ENCODE measurements at regions of chrX and their contacts with region 1.

Region 1: GRCh38 chrX:41010188-41010846 is 74.9 kb upstream of the USP9X start:
- DNase-seq: peak; percentile 75
- H3K4me3 ChIP-seq: peak overlapping the region; percentile 7 to 35 (median 13)
- H3K27ac ChIP-seq: peak overlapping the region; percentile 85
- H3K4me1 ChIP-seq: peaks cover 9% of the 10 kb centered on the region
- H3K27me3 ChIP-seq: no peaks in the 10 kb centered on the region
- CTCF ChIP-seq: no peak

Region 2: DNA sequence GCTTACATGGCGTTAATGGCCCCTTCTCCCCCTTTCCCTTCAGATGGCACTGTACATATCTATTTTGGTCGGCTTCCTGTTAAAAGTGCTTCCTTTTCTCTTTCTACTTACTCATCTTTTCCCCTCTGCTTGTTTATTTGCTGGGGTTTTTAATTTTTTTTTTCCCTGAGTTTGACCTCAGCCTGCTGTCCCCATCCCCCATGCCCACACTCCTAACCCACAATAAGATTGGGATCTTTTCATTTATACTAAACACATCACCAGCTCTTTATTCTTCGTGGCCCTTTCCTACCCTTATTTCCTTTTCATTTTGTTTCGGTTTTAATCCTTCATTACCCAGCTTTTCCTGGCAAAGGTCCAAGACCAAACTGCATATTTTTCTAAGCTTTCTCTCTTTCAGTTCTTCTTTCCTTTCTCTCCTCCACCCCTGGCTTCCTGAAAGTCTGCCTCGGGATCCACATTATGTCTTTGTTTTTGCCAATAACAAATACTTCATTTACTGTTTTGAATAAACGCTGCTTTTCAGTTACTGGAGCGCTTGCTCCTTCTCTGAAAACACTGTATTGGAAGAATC is 77.1 kb before region 1 on chrX:
- CTCF ChIA-PET with region 1: no interaction called
- dilution Hi-C with region 1: no loop called
- in situ Hi-C with region 1: no loop called
- intact Hi-C with region 1: loop called (anchors 5 kb)
- DNase-seq: no peak
- H3K4me3 ChIP-seq: peak overlapping the region in 1 of 3 experiments; percentile 2
- H3K27ac ChIP-seq: peak overlapping the region; percentile 18
- H3K4me1 ChIP-seq: peaks cover 6% of the 10 kb centered on the region
- H3K27me3 ChIP-seq: no peaks in the 10 kb centered on the region
- CTCF ChIP-seq: no peak

Region 3: GRCh38 chrX:41096339-41096955 is 86.1 kb after region 1 on chrX:
- CTCF ChIA-PET with region 1: no interaction called
- dilution Hi-C with region 1: no loop called
- in situ Hi-C with region 1: no loop called
- intact Hi-C with region 1: no loop called
- DNase-seq: no peak
- H3K4me3 ChIP-seq: no peak overlapping the region
- H3K27ac ChIP-seq: no peak overlapping the region
- H3K4me1 ChIP-seq: no peaks in the 10 kb centered on the region
- H3K27me3 ChIP-seq: no peaks in the 10 kb centered on the region
- CTCF ChIP-seq: no peak